Activated naive CD4-positive, alpha-beta T cell treated with anti-CD3 and anti-CD28 coated beads for 36 hours (primary cell): ENCODE measurements at regions of chr13 and their contacts with region 1.

Region 1: DNA sequence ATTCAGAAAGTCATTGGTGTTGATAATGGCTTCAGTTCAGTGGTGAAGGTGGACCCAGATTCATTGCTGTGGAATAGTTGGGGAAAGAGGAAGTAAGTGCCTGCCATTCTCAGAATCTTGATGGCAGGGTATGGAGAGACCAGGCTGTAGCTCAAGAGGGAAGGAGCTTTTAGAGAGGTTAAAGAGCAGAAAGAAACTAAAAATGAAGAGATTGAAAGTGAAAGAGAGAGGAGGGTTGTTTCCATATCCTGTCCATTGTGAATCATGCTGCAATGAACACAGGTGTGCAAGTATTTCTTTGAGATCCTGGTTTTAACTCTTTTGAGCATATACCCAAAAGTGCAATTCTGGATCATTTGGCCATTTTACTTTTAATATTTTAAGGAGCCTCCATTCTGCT is 12.5 kb downstream of the GJB6 start:
- DNase-seq: no peak
- H3K4me3 Mint-ChIP-seq: peak overlapping the region; percentile 2
- H3K27ac Mint-ChIP-seq: peak overlapping the region; percentile 5
- H3K4me1 Mint-ChIP-seq: peaks cover 17% of the 10 kb centered on the region
- H3K27me3 Mint-ChIP-seq: no peaks in the 10 kb centered on the region

Region 2: GRCh38 chr13:19810996-19811891 is 408.3 kb before region 1 on chr13:
- CTCF ChIA-PET with region 1: no interaction called
- intact Hi-C with region 1: no loop called
- DNase-seq: no peak
- H3K4me3 Mint-ChIP-seq: no peak overlapping the region
- H3K27ac Mint-ChIP-seq: no peak overlapping the region
- H3K4me1 Mint-ChIP-seq: no peaks in the 10 kb centered on the region
- H3K27me3 Mint-ChIP-seq: no peaks in the 10 kb centered on the region

Region 3: GRCh38 chr13:20192158-20192835 is 27.3 kb before region 1 on chr13:
- CTCF ChIA-PET with region 1: interaction called, 10 read pairs
- intact Hi-C with region 1: loop called (anchors 2 kb)
- DNase-seq: peak; percentile 50
- H3K4me3 Mint-ChIP-seq: peak overlapping the region; percentile 65
- H3K27ac Mint-ChIP-seq: no peak overlapping the region
- H3K4me1 Mint-ChIP-seq: peaks cover 13% of the 10 kb centered on the region
- H3K27me3 Mint-ChIP-seq: peaks cover 45% of the 10 kb centered on the region

Region 4: GRCh38 chr13:20247403-20247802 is 27.8 kb after region 1 on chr13:
- CTCF ChIA-PET with region 1: no interaction called
- intact Hi-C with region 1: no loop called
- DNase-seq: no peak
- H3K4me3 Mint-ChIP-seq: no peak overlapping the region
- H3K27ac Mint-ChIP-seq: no peak overlapping the region
- H3K4me1 Mint-ChIP-seq: no peaks in the 10 kb centered on the region
- H3K27me3 Mint-ChIP-seq: no peaks in the 10 kb centered on the region

Region 5: GRCh38 chr13:20369886-20370361 is 150.3 kb after region 1 on chr13:
- CTCF ChIA-PET with region 1: no interaction called
- intact Hi-C with region 1: no loop called
- DNase-seq: no peak
- H3K4me3 Mint-ChIP-seq: no peak overlapping the region
- H3K27ac Mint-ChIP-seq: no peak overlapping the region
- H3K4me1 Mint-ChIP-seq: no peaks in the 10 kb centered on the region
- H3K27me3 Mint-ChIP-seq: peaks cover 7% of the 10 kb centered on the region

Region 6: DNA sequence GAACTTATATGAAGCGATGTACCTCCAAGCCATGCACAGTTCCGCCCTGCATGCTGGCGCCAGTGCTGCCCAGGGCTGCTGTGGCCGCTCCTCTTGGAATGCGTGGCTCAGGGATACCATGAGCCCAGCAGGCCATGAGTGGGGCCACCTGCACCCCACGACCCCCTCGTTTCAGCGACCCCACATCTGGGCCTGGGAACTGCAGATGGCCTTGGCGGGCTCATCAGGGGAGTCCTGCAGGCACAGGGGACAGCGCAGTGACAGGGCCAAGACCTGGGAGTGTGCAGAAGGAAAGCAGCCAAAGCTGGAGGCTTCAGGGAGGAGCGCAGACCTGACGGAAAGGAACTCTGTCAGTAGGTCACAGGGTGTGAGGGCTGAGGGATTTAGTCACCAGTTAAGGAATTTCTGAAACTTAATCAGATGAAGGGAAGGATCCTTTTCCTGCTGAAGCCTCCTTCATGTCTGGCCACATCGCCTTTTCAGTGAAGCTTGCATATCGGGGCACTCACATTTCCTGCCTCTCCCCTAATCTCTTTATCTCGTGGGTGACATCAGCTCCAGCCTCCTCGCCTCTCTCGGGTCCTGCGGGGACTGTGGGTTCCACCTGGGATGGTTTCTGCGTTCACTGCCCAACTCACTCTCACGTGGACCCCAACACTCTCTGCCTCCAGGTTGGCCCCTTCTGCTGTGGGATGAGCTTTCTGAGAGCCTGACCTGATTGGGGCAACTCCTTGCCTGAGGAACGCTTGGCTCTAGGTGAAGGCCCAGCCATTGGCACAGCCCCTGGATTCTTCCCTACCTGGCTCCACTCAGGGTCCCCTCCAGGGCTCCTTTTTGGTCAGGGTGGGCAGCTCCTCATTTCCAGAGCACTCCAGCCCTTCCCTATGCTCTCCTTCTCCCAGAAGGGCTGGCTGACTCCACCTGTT is 182.6 kb after region 1 on chr13:
- CTCF ChIA-PET with region 1: no interaction called
- intact Hi-C with region 1: no loop called
- DNase-seq: no peak
- H3K4me3 Mint-ChIP-seq: no peak overlapping the region
- H3K27ac Mint-ChIP-seq: no peak overlapping the region
- H3K4me1 Mint-ChIP-seq: no peaks in the 10 kb centered on the region
- H3K27me3 Mint-ChIP-seq: no peaks in the 10 kb centered on the region

Region 7: GRCh38 chr13:20420938-20421337 is 201.4 kb after region 1 on chr13:
- CTCF ChIA-PET with region 1: no interaction called
- intact Hi-C with region 1: loop called (anchors 1 kb)
- DNase-seq: no peak
- H3K4me3 Mint-ChIP-seq: no peak overlapping the region
- H3K27ac Mint-ChIP-seq: peak overlapping the region; percentile 59
- H3K4me1 Mint-ChIP-seq: peaks cover 35% of the 10 kb centered on the region
- H3K27me3 Mint-ChIP-seq: no peaks in the 10 kb centered on the region